ENCODE measurements at regions of chr13 and their contacts with region 1.

Region 1: GRCh38 chr13:26494571-26495195 is 62.8 kb upstream of the WASF3 start:
- DNase-seq: no peak
- ATAC-seq: no peak
- H3K4me3 Mint-ChIP-seq: no peak overlapping the region
- H3K27ac Mint-ChIP-seq: no peak overlapping the region
- H3K4me1 Mint-ChIP-seq: peaks cover 19% of the 10 kb centered on the region
- H3K27me3 Mint-ChIP-seq: no peaks in the 10 kb centered on the region; the same call in 1 of the 2 replicates
- CTCF ChIP-seq: no peak

Region 2: DNA sequence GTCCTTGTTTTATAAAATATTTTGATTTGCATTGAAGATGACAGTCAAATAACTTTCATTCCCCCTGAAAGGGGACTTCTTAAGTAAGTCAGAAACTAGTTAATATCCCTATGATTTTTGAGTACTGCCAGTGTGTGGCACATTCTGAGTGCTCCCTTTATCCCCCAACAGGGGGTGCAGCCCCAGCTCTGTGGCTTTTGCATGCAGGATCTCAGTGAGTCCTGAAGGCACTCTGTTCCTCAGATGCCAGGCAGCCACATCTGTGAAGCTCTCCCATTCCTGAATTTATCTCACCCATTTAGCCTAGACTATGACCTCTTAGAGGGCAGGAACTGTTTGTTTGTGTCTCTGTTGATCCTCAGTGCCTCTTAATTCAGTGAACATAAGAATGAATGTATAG is 117.6 kb before region 1 on chr13:
- CTCF ChIA-PET with region 1: interaction called, 10 read pairs
- POLR2A ChIA-PET with region 1: no interaction called
- DNase-seq: peak; percentile 60
- ATAC-seq: peak; percentile 96
- H3K4me3 Mint-ChIP-seq: no peak overlapping the region
- H3K27ac Mint-ChIP-seq: no peak overlapping the region
- H3K4me1 Mint-ChIP-seq: peaks cover 14% of the 10 kb centered on the region
- H3K27me3 Mint-ChIP-seq: no peaks in the 10 kb centered on the region
- CTCF ChIP-seq: peak; percentile 51

Region 3: GRCh38 chr13:26482451-26483197 is 12.1 kb before region 1 on chr13:
- CTCF ChIA-PET with region 1: interaction called, 46 read pairs
- POLR2A ChIA-PET with region 1: no interaction called
- DNase-seq: peak; percentile 74
- ATAC-seq: peak; percentile 68
- H3K4me3 Mint-ChIP-seq: no peak overlapping the region
- H3K27ac Mint-ChIP-seq: no peak overlapping the region
- H3K4me1 Mint-ChIP-seq: peaks cover 24% of the 10 kb centered on the region
- H3K27me3 Mint-ChIP-seq: no peaks in the 10 kb centered on the region
- CTCF ChIP-seq: peak; percentile 89

Region 4: DNA sequence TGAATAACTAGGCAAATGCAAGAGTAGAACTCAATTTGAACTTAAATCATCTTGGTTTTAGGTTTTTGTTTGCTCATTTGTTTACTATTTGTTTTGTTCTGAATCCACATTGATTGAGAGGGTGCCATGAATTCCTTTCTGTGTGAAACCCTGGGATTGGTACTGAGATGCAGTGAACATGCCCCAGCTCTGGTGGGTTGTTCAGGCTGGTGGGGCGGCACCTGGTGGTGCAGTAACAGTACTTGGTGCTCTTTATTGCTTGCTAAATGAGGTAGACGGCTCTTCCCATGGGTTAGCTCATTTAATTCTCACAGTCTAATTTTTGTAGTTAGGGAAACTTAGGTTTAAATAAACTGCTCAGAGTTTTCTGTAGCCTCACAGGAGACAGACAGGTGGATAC is 111.2 kb after region 1 on chr13:
- CTCF ChIA-PET with region 1: interaction called, 11 read pairs
- POLR2A ChIA-PET with region 1: no interaction called
- DNase-seq: peak; percentile 50
- ATAC-seq: peak; percentile 97
- H3K4me3 Mint-ChIP-seq: no peak overlapping the region
- H3K27ac Mint-ChIP-seq: peak overlapping the region; percentile 58
- H3K4me1 Mint-ChIP-seq: peaks cover 34% of the 10 kb centered on the region
- H3K27me3 Mint-ChIP-seq: no peaks in the 10 kb centered on the region
- CTCF ChIP-seq: no peak

Measured in WTC11 (cell line).